CD4-positive, alpha-beta memory T cell (primary cell): ENCODE measurements at regions of chr1 and their contacts with region 1.

Region 1: GRCh38 chr1:6205849-6206519 is at the start of gene RNF207:
- DNase-seq: peak; percentile 50 to 78 (median 58)
- H3K4me3 ChIP-seq: peak within 1 kb of the TSS; percentile 67 to 73
- H3K4me3 Mint-ChIP-seq: peak within 1 kb of the TSS; percentile 73 to 85 (median 79)
- H3K27ac ChIP-seq: peak within 1 kb of the TSS; percentile 38
- H3K27ac Mint-ChIP-seq: peak within 1 kb of the TSS in 4 of 7 donors; percentile 16 to 35 (median 30)
- H3K4me1 ChIP-seq: peaks cover 25% of the 10 kb centered on the region
- H3K4me1 Mint-ChIP-seq: peaks cover 3 to 31% (median 11%) of the 10 kb centered on the region in 4 donors
- H3K27me3 ChIP-seq: no peaks in the 10 kb centered on the region
- H3K27me3 Mint-ChIP-seq: peaks cover 0 to 3% of the 10 kb centered on the region in 2 donors
- total RNA-seq, gene RNF207: 8.7 to 9.4 TPM

Region 2: DNA sequence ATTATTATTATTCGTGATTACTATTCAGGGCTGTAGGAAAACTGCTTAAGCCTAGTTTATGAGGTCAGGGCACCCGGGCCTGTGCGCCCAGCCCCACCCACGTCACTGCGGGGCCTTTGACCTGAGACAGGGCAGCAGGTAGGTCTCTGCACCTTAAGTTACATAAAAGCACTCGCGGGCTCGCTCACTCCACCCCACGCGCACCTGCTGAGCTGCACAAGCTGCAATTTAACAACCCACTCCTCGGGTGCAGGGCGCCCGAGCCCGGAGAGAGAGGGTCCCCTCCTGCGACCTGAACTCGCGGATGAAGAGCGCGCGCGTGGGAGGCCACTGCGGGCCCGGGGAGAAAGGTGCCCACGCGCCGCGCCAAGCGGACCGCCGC is 29.3 kb after region 1 on chr1:
- CTCF ChIA-PET with region 1: interaction called, 20 read pairs
- POLR2A ChIA-PET with region 1: interaction called, 5 read pairs
- intact Hi-C with region 1: no loop called
- DNase-seq: peak in 1 of 5 donors; percentile 17
- H3K4me3 ChIP-seq: peak overlapping the region; percentile 60 to 86
- H3K4me3 Mint-ChIP-seq: peak overlapping the region; percentile 84 to 93 (median 88)
- H3K27ac ChIP-seq: peak overlapping the region; percentile 42
- H3K27ac Mint-ChIP-seq: peak overlapping the region; percentile 15 to 84 (median 57)
- H3K4me1 ChIP-seq: peaks cover 11% of the 10 kb centered on the region
- H3K4me1 Mint-ChIP-seq: peaks cover 6 to 16% (median 12%) of the 10 kb centered on the region in 4 donors
- H3K27me3 ChIP-seq: peaks cover 5% of the 10 kb centered on the region
- H3K27me3 Mint-ChIP-seq: peaks cover 3 to 9% of the 10 kb centered on the region in 2 donors